ENCODE measurements at regions of chr10 and their contacts with region 1.

Region 1: GRCh38 chr10:89327784-89328441 is at the start of gene IFIT3:
- DNase-seq: no peak
- ATAC-seq: peak; percentile 94
- total RNA-seq, gene IFIT3: 7.0 TPM

Region 2: DNA sequence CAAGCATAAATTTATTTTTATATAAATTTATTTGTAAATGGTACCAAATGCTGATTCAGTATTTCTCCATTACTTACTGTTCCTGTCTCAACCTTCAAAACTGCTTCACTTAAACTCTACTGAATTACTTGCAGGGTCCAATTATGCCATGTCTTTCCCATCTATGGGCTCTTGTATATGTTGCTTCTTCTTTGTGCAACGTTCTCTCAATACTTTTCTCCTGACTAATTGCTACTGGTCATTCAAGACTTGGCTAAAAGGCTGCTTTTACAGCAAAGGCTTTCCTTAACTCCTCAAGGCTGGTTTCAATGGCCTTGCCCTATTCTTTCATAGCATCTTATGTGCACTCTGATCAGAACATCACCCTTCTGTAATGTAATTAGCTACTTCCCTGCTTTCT is 812.7 kb before region 1 on chr10:
- intact Hi-C with region 1: no loop called
- DNase-seq: no peak
- ATAC-seq: no peak

Region 3: GRCh38 chr10:89283936-89284475 is 43.9 kb before region 1 on chr10:
- intact Hi-C with region 1: loop called (anchors 5 kb)
- DNase-seq: peak; percentile 76
- ATAC-seq: peak; percentile 97

Region 4: GRCh38 chr10:89301721-89302445 is 26.0 kb before region 1 on chr10 and contains the start of gene IFIT2:
- intact Hi-C with region 1: loop called (anchors 2 kb)
- DNase-seq: no peak
- ATAC-seq: peak; percentile 70
- total RNA-seq, gene IFIT2: 4.2 TPM

Region 5: DNA sequence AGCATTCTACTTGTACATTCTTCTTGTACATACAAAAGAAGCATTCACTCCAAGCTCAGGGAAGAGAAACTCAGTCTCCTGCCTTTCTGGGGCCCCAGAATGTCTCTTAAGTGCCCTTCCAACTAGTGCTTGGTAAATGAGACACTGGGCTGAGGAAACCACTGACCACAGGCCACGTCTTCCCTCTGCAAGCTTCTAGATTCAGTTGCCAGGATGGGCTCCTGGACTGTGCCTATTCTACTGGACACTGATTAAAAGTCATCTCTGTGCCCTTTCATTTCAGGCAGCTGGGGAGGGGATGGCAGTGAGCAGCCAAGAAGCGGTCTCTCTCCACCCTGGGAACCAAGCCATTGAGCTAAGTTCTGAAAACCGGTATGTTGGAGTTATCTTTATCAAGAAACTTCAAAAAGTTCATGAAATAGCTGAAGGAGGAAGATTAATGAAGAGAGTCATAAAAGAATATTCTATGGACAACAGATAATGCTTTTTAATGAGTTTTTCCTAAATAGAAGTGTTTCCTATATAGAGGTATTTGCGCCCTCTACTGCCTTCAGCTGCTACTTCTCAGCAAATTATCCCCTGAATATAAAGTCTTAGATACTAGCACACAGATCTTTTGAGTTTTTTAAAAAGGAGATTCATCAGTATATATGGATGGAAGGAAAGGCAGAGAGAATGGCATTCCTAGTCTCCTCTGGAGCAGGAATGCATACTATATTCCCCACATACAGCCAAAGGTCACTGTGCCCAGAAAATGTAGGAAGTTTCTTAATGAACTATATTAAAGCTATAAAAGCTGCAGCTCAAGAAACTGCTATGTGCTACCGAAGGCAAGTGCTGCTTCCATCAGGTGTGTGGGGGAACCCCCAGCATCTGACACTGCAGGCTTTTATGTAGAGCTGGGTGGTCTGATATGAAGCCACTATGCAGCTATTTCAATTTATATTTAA is 41.5 kb after region 1 on chr10:
- intact Hi-C with region 1: loop called (anchors 5 kb)
- DNase-seq: no peak
- ATAC-seq: no peak

Measured in Right ventricle myocardium inferior (tissue), 1 donor.